ENCODE measurements at regions of chr3 and their contacts with region 1.

Region 1: GRCh38 chr3:187738331-187739093 is 6.8 kb downstream of the BCL6 start:
- DNase-seq: peak; percentile 85 to 86
- H3K4me3 ChIP-seq: peak overlapping the region; percentile 53 to 89 (median 83)
- H3K27ac ChIP-seq: peak overlapping the region; percentile 30; the same call in 1 of the 2 replicates
- H3K4me1 ChIP-seq: peaks cover 0 to 19% (median 8%) of the 10 kb centered on the region in 4 experiments; a peak in 5 of 7 replicates
- H3K27me3 ChIP-seq: peaks cover 0 to 16% (median 7%) of the 10 kb centered on the region in 4 experiments; a peak in 3 of 7 replicates
- CTCF ChIP-seq: peak; percentile 62 to 84 (median 72)
- EP300 ChIP-seq: 0 out of 3 replicates have a peak, but pooled peaks of 1 of the 2 experiments have one; percentile 8
- POLR2A ChIP-seq: no peak
- RAD21 ChIP-seq: peak; percentile 88 to 92

Region 2: DNA sequence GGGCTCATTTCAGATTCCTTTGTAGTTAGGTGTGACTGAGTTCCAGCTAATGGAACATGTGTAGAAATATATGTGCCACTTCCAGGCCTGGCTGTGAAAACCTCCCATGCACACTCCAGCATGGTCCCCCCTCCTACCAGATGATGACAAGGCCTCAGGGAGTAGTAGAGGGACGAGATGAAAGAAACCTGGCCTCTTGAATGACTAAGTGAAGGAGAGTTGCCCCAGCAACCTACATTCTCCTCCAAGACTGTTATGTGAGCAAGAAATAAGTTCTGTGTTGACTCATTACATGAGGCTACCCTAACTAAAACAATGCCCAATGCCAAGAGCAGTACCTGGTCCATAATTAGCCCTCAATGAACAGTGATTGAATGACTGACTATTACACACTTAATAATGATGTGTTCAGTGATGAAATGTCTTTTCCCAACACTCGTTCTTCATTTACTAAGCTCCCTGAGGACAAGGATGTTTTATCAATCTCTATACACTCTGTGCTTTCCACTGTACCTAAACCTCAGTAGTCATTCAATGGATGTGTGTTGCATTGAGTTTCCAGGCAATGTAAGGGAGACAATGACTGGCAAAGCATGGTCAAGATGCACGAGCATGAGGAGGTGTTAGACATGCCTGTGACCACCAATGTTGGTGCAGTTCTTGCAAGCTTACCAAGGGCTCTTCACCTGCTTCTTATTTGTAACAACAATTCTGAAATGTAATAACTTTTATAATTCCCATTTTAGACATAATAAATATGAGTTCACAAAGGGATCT is 68.8 kb after region 1 on chr3:
- CTCF ChIA-PET with region 1: interaction called, 12 read pairs
- POLR2A ChIA-PET with region 1: no interaction called
- DNase-seq: no peak
- H3K4me3 ChIP-seq: no peak overlapping the region
- H3K27ac ChIP-seq: no peak overlapping the region
- H3K4me1 ChIP-seq: peaks cover 1 to 9% (median 4%) of the 10 kb centered on the region in 4 experiments; a peak in 5 of 7 replicates
- H3K27me3 ChIP-seq: no peaks in the 10 kb centered on the region
- CTCF ChIP-seq: no peak
- EP300 ChIP-seq: no peak
- POLR2A ChIP-seq: no peak
- RAD21 ChIP-seq: no peak

Region 3: DNA sequence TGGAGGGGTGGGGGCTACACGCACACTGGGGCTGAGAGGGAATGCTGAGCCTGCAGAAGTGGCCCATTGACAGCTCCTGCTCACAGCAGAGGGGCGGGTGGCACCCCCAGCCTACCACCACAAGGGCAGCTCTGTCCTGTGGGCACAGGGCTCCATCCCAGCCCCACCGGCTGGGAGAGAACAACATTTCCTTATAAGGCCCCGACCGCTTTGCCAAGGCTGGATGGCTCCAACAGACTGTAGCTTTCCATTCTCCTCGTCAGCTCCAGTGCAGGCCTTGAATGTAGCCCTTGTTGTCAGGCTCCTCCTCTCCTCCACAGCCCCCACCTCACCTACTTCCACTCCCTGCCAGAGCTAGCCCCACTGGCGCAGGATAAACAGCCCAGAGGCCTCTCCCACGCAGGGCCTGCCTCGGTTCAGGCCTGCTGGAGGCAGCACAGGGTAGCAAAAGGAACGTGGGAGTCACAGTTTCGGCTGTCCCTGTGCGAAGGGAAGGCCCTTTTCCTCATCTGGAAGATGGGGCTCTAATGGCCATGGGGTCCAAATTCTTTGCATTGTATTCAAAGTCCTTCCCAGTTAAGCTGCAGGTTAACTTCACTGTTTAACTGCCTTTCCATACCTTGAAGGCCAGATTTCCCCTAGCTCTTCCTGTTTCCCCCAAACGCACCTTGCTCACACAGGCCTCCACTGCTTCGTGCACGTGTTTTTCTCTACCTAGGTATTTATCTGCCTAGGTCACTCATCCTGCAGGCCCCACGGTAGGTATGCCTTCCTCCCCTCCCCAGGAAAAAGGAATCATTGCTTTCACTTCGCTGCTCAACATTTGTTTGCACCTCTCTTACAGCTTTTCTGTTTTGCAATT is 313.9 kb after region 1 on chr3:
- CTCF ChIA-PET with region 1: interaction called, 40 read pairs
- POLR2A ChIA-PET with region 1: interaction called, 4 read pairs
- DNase-seq: peak; percentile 44 to 65
- H3K4me3 ChIP-seq: no peak overlapping the region
- H3K27ac ChIP-seq: no peak overlapping the region
- H3K4me1 ChIP-seq: peaks cover 3 to 16% (median 12%) of the 10 kb centered on the region in 4 experiments
- H3K27me3 ChIP-seq: no peaks in the 10 kb centered on the region; a peak in 1 of 7 replicates
- CTCF ChIP-seq: peak; percentile 49 to 59 (median 56)
- EP300 ChIP-seq: no peak; a peak in 1 of 3 replicates
- POLR2A ChIP-seq: peak in 1 of 2 experiments; percentile 42; a peak in 1 of 3 replicates
- RAD21 ChIP-seq: peak; percentile 78 to 82

Region 4: GRCh38 chr3:188262913-188263683 is 524.6 kb after region 1 on chr3:
- CTCF ChIA-PET with region 1: interaction called, 12 read pairs
- POLR2A ChIA-PET with region 1: interaction called, 3 read pairs
- DNase-seq: no peak
- H3K4me3 ChIP-seq: no peak overlapping the region
- H3K27ac ChIP-seq: no peak overlapping the region
- H3K4me1 ChIP-seq: peaks cover 4 to 9% (median 8%) of the 10 kb centered on the region in 4 experiments; a peak in 6 of 7 replicates
- H3K27me3 ChIP-seq: no peaks in the 10 kb centered on the region
- CTCF ChIP-seq: no peak
- EP300 ChIP-seq: no peak
- POLR2A ChIP-seq: no peak
- RAD21 ChIP-seq: no peak

Region 5: DNA sequence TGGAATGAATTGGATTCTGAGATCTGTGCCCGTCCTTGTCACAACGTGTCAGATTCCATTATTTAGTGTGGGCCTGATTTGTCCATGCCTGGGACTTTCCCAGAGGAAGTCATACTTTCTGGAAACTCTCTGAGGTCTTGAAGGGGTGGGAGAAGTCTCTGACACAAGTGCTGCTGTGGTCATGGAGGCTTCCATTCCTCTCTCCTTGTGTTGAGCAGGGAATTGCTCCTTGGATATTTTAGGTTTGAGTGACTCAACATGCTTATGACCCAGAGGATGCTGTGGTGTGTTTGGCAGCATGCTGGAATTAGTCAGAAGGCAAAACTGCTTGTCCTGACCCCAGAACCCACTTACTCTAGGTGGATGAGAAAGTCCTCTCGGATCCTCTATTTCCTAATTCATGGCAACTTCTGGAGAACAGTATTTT is 547.6 kb after region 1 on chr3:
- CTCF ChIA-PET with region 1: interaction called, 12 read pairs
- POLR2A ChIA-PET with region 1: no interaction called
- DNase-seq: no peak
- H3K4me3 ChIP-seq: no peak overlapping the region
- H3K27ac ChIP-seq: no peak overlapping the region
- H3K4me1 ChIP-seq: peaks cover 0 to 4% (median 0%) of the 10 kb centered on the region in 4 experiments; a peak in 1 of 7 replicates
- H3K27me3 ChIP-seq: peaks cover 0 to 1% (median 0%) of the 10 kb centered on the region in 4 experiments; a peak in 1 of 7 replicates
- CTCF ChIP-seq: no peak
- EP300 ChIP-seq: no peak
- POLR2A ChIP-seq: no peak
- RAD21 ChIP-seq: no peak

Region 6: GRCh38 chr3:188947401-188948280 is 1209.1 kb after region 1 on chr3:
- CTCF ChIA-PET with region 1: interaction called, 107 read pairs
- POLR2A ChIA-PET with region 1: interaction called, 13 read pairs
- DNase-seq: peak; percentile 74 to 92
- H3K4me3 ChIP-seq: peak overlapping the region; percentile 49 to 71 (median 66)
- H3K27ac ChIP-seq: peak overlapping the region; percentile 82
- H3K4me1 ChIP-seq: peaks cover 3 to 12% (median 8%) of the 10 kb centered on the region in 4 experiments; a peak in 6 of 7 replicates
- H3K27me3 ChIP-seq: peaks cover 0 to 4% (median 1%) of the 10 kb centered on the region in 4 experiments; a peak in 1 of 7 replicates
- CTCF ChIP-seq: peak; percentile 12 to 55 (median 31)
- EP300 ChIP-seq: no peak
- POLR2A ChIP-seq: peak; percentile 61 to 65
- RAD21 ChIP-seq: peak in 1 of 2 experiments; percentile 32; a peak in 1 of 4 replicates

Measured in H1 (cell line).